ENCODE measurements at regions of chrX and their contacts with region 1.

Region 1: DNA sequence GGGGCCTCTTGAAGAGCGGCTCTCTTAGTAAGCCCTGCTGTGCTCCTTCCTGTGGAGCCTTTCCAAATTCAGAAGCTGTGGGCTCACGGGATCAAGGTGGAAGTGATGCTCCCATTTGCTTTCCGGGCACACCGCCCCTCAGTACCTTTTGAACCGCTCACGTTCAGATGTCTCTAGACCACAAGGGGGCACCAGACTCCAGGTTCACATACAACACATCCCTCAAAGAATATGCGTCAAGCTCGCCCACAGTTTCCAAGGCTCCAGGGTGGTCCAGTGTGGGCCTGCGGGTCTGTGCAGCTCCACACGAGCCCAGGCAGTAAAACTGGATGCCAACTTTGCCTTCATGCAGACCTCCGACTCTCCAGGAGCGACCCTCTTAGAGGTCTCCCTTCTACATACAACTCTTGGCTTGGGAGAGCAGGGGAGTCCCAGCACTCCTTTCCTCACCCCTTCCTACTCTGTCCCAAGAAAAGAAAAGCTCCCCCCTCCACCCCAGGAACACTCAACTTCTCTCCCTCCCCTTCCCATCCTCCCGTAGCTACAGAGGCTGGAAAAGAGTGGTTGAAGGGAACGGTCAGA is 11.0 kb downstream of the SUPT20HL1 start:
- DNase-seq: peak; percentile 86
- H3K4me3 Mint-ChIP-seq: peak overlapping the region; percentile 77
- H3K27ac Mint-ChIP-seq: peak overlapping the region; percentile 84
- H3K4me1 Mint-ChIP-seq: peaks cover 23% of the 10 kb centered on the region
- H3K27me3 Mint-ChIP-seq: peaks cover 3% of the 10 kb centered on the region

Region 2: DNA sequence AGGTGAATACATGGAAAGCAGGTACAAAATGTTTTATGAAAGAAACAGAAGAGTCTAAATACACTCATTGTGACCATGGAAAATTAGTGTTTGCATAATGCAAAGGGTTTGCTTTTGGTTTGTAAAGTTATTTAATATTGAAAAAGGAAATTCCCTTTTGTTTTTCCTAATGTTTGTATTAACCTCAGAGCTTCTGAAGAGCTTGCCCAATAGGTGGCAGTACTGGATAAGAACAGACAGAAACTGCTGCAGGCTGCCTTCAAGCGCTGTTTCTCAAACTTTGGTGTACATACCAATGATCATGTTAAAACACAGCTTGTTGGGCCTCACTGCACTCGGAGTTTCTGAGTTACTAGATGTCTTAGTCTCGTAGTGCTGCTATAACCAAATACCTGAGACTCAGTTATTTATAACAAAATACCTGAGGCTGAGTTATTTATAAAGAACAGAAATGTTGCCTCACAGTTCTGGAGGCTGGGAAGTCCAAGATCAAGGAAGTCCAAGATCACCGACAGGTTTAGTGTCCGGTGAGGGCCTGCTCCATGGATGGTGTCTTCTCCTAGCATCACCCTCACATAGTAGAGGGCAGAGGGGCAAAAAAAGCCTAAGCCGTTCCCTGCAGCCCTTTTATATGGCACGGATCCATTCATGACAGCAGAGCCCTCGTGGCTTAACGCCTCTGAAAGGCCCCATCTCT is 111.8 kb before region 1 on chrX:
- intact Hi-C with region 1: loop called (anchors 2 kb)
- DNase-seq: peak; percentile 74
- H3K4me3 Mint-ChIP-seq: no peak overlapping the region
- H3K27ac Mint-ChIP-seq: no peak overlapping the region
- H3K4me1 Mint-ChIP-seq: peaks cover 19% of the 10 kb centered on the region
- H3K27me3 Mint-ChIP-seq: no peaks in the 10 kb centered on the region

Region 3: GRCh38 chrX:24301060-24301459 is 70.4 kb before region 1 on chrX:
- intact Hi-C with region 1: loop called (anchors 5 kb)
- DNase-seq: no peak
- H3K4me3 Mint-ChIP-seq: no peak overlapping the region
- H3K27ac Mint-ChIP-seq: no peak overlapping the region
- H3K4me1 Mint-ChIP-seq: no peaks in the 10 kb centered on the region
- H3K27me3 Mint-ChIP-seq: peaks cover 1% of the 10 kb centered on the region

Region 4: DNA sequence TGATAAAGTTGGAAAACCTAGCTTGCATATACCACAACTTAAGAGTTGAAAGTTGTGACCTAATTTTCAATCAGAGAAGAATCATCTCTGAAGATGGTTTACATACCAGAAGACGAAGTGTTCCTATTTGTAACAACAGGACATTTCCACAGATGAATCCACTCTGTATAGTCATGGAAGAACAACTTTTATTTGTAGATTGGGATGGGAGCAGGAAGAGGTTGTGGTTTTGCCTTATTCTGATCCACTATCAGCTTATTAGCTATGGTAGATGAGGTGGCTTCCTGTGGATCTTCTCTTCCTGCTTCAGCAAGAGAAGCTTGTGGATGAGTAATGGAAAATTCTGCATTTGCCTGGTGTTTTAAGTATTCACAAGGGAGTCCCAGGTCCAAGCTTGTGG is 29.7 kb before region 1 on chrX:
- intact Hi-C with region 1: loop called (anchors 2 kb)
- DNase-seq: no peak
- H3K4me3 Mint-ChIP-seq: no peak overlapping the region
- H3K27ac Mint-ChIP-seq: peak overlapping the region; percentile 50
- H3K4me1 Mint-ChIP-seq: peaks cover 17% of the 10 kb centered on the region
- H3K27me3 Mint-ChIP-seq: no peaks in the 10 kb centered on the region

Region 5: GRCh38 chrX:24498975-24499374 is 127.5 kb after region 1 on chrX:
- intact Hi-C with region 1: loop called (anchors 5 kb)
- DNase-seq: no peak
- H3K4me3 Mint-ChIP-seq: no peak overlapping the region
- H3K27ac Mint-ChIP-seq: no peak overlapping the region
- H3K4me1 Mint-ChIP-seq: peaks cover 14% of the 10 kb centered on the region
- H3K27me3 Mint-ChIP-seq: no peaks in the 10 kb centered on the region

Measured in activated CD4-positive, alpha-beta T cell treated with anti-CD3 and anti-CD28 coated beads, Interleukin-2, amount 10 ng/mL, durations not matched to agents 24 days and 14 days (primary cell).